GM10248 (cell line): ENCODE measurements at regions of chr1 and their contacts with region 1.

Region 1: GRCh38 chr1:179121159-179121938 is 39.5 kb downstream of the TOR3A start:
- DNase-seq: peak; percentile 42
- CTCF ChIP-seq: peak; percentile 62

Region 2: GRCh38 chr1:179025975-179026812 is 95.2 kb before region 1 on chr1:
- CTCF ChIA-PET with region 1: no interaction called
- POLR2A ChIA-PET with region 1: no interaction called
- DNase-seq: peak; percentile 79
- CTCF ChIP-seq: no peak

Region 3: DNA sequence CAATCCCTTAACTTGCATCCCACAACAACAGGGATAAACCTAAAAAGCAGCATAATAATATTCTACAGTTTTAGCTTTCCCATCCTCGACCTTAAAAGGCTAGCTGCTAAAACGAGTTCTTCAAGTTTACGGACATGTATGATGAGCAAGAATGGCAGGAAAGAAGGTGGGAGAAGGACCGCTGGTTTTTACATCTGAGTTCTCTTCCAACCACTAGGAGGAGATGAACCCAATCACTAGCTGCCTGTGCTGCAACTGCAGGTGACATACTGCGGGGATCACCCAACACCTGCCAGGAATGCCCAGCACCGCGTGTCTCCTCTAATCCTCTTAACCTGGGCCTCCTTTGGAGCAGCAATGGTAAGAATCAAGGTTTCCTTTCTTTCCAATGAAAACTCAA is 16.0 kb before region 1 on chr1:
- CTCF ChIA-PET with region 1: interaction called, 15 read pairs
- POLR2A ChIA-PET with region 1: no interaction called
- DNase-seq: no peak
- CTCF ChIP-seq: no peak

Region 4: DNA sequence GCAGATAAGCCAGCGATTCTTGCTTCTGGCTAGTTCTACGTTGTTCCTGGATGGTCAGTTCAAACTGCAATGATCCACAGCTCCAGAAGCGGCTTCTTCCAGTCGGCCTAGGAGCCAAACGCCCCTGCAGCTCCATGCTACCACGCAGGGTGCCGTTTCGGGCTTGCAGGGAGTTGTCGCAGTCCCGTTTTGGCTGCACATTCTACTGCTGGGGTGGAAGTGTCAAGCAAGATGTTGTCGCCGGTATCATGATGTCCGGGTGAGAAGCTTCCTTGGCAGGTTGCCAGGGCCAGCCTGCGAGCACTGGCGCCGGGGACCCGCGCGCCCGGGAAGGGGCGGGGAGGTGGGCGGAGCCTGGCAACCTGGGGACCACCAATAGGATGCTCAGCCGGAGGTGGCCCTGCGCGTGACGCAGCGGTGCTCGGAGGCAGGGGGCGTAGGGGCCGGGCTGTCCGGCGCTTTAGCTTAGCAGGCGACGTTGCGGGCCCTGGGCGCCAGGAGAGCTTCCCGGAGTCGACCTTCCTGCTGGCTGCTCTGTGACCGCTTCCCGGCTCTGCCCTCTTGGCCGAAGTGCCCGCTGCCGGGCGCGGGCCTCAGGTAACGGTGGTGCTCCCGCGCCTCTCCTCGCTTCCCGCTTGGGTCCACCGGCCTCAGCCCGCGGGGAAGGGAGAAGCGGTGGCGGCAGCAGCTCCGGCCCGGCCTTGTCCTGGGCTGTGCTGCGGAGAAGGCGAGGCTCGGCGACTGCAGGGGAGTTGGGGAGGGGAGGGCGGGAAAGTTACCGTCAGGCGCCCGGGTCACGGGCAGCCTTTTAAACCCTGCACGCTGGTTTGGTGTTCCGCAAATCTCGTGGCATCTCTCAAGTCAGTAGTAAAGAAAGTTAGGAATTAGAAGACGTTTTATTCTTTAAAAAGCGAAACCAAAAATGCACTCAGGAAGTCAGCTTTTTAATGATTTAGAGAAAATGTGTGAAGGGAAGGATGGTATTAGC is 172.3 kb after region 1 on chr1 and contains the start of gene SOAT1:
- CTCF ChIA-PET with region 1: interaction called, 24 read pairs
- POLR2A ChIA-PET with region 1: no interaction called
- DNase-seq: peak; percentile 95
- CTCF ChIP-seq: peak; percentile 23

Region 5: DNA sequence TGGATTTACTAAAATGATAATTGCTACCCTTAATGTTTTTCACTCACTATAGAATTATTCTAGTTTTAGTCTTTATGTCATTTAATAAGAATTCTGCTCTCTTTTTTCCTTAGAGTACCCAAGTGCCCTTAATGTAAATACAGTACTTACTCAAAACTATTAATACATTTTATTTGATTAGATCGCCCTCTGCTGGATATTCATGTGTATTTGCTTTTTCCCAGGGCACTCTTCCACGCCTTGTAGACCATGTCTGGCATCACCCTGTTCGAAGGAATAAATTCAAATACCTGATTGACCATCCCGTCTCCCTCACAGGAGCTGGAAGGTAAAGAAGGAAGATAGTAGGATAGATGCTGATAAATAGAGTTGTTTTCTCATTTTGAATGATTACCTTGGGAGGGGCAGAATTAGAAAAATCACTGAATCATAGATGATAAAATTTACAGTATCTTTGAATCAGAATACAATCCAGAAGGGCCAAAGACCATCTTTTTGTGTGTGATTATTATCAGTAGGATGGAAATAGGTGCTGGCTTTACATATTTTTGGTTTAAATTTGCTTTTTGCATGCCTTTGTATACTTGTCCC is 248.5 kb after region 1 on chr1:
- CTCF ChIA-PET with region 1: interaction called, 46 read pairs
- POLR2A ChIA-PET with region 1: interaction called, 3 read pairs
- DNase-seq: peak; percentile 64
- CTCF ChIP-seq: peak; percentile 71